Heart left ventricle (tissue), 16 donors: ENCODE measurements at regions of chr17 and their contacts with region 1.

Region 1: GRCh38 chr17:43994272-43995149 is 9.9 kb upstream of the NAGS start:
- DNase-seq: peak; percentile 49 to 83 (median 68)
- ATAC-seq: peak; percentile 72 to 89 (median 85)
- H3K4me3 ChIP-seq: peak overlapping the region in 9 of 12 donors; percentile 22 to 48 (median 34)
- H3K27ac ChIP-seq: no peak overlapping the region
- H3K4me1 ChIP-seq: peaks cover 0 to 10% (median 7%) of the 10 kb centered on the region in 12 donors
- H3K27me3 ChIP-seq: peaks cover 0 to 22% (median 10%) of the 10 kb centered on the region in 9 donors
- CTCF ChIP-seq: peak; percentile 73 to 93 (median 82)
- POLR2A ChIP-seq: no peak

Region 2: GRCh38 chr17:43878260-43879175 is 116.0 kb before region 1 on chr17:
- intact Hi-C with region 1: loop called in 2 of 10 experiments (anchors 2 to 10 kb)
- DNase-seq: peak; percentile 58 to 87 (median 68)
- ATAC-seq: peak; percentile 24 to 79 (median 74)
- H3K4me3 ChIP-seq: no peak overlapping the region
- H3K27ac ChIP-seq: peak overlapping the region in 3 of 12 donors; percentile 7 to 13 (median 12)
- H3K4me1 ChIP-seq: peaks cover 0 to 29% (median 7%) of the 10 kb centered on the region in 12 donors
- H3K27me3 ChIP-seq: no peaks in the 10 kb centered on the region
- CTCF ChIP-seq: peak in 11 of 12 donors; percentile 91 to 97 (median 95)
- POLR2A ChIP-seq: no peak

Region 3: DNA sequence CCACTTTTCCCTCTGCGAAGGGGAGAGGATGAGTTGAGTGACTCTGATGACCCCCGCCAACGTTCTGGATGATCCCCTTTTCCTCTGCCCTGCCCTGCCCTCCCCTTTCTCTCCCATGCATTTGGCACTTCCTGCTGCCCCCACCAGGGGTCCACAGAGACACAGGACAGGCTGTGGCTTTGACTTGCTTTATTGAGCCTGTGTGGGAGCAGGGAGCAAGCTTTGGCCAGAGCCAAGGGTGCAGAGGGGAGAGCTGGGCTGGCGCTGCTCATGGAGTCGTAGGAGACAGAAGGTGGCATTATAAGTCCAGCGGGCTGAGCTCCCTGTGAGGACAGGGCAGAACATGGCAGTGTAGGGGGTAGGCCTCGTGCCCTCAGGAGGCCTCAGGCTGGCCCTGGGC is 53.9 kb before region 1 on chr17:
- intact Hi-C with region 1: loop called in 9 of 10 experiments (anchors 1 to 2 kb)
- DNase-seq: peak in 2 of 5 donors; percentile 38 to 61
- ATAC-seq: peak; percentile 41 to 57 (median 44)
- H3K4me3 ChIP-seq: no peak overlapping the region
- H3K27ac ChIP-seq: no peak overlapping the region
- H3K4me1 ChIP-seq: peaks cover 0 to 11% (median 3%) of the 10 kb centered on the region in 12 donors
- H3K27me3 ChIP-seq: peaks cover 0 to 21% (median 9%) of the 10 kb centered on the region in 9 donors
- CTCF ChIP-seq: peak; percentile 17 to 46 (median 30)
- POLR2A ChIP-seq: no peak

Region 4: DNA sequence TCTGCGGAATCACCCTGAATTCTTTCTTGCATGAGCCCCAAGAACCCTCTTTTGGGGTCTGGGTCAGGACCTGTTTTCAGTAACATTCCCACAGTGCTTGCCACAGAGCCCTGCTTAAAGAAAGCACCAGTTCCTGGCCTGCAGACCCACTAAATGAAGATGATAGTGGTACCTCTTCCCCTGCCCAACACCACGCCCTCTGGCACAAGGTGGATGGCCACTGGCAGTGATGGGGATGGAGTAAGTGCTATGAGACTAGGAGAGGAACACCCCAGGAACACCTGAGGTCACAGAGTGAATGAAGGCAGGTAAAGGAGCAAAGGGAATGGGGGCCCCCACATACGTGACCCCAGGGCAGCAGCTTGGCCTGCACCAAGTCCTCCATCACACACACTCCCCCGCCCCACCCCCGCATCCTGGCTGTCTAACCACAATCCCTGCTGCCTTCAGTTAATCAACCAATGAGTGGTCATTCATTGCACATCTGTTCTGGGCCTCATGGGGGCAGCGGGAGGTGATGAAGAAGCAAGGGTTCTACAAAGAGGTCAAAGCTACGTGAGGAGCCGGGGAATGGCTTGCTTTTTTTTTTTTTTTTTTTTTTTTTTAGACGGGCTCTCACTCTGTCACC is 48.3 kb before region 1 on chr17:
- intact Hi-C with region 1: loop called (anchors 1 to 2 kb)
- DNase-seq: no peak
- ATAC-seq: no peak
- H3K4me3 ChIP-seq: no peak overlapping the region
- H3K27ac ChIP-seq: no peak overlapping the region
- H3K4me1 ChIP-seq: peaks cover 0 to 3% (median 0%) of the 10 kb centered on the region in 12 donors
- H3K27me3 ChIP-seq: peaks cover 0 to 40% (median 14%) of the 10 kb centered on the region in 9 donors
- CTCF ChIP-seq: no peak
- POLR2A ChIP-seq: no peak

Region 5: DNA sequence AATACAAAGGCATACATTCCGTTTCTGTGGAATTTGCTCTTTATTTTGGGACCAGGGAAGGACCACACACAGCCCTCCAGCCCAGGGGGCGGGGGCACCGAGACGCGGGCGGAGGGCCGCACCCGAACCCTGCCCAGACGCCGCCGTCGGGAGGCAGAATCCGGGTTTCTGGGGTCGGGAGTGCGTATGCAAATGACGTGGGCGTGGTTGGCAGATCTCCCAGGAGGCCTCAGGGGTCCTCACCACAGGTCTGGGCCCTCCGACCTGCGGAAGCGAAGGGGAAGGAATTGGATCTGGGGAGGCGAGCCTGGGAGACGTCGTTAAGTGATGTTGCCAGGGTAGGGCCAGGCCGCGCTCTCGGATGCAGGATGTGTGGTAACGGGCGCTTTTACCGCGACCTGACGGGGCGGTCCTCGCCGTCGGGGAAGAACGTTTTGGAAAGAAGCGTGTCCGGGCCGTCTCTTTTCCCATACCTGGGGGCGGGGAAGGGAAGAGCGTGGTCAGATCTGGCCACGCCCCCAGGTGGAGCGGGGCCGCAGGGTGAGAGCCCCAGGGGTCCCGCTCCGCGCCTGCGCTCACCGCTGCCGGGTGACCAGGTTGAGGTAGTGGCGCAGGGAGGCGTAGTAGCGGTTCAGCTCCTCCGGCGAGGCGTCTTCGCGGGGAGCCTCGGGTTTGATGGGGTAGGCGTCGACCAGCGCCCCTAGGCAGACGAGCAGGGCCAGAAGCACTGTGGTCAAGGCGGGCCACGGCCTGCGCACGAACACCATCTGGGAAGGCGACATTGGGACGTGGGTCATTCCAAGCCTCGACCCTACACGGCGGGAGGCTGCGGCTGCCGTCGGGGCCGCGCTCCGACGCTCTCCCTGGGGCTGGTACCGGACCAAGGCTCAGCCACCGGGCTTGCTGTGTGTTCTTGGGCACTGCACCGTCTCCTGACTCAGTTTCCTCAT is 41.5 kb before region 1 on chr17:
- intact Hi-C with region 1: loop called in 1 of 10 experiments (anchors 2 kb)
- DNase-seq: no peak
- ATAC-seq: no peak
- H3K4me3 ChIP-seq: peak overlapping the region in 2 of 12 donors; percentile 25
- H3K27ac ChIP-seq: no peak overlapping the region
- H3K4me1 ChIP-seq: peaks cover 0 to 13% (median 3%) of the 10 kb centered on the region in 12 donors
- H3K27me3 ChIP-seq: peaks cover 24 to 72% (median 45%) of the 10 kb centered on the region in 9 donors
- CTCF ChIP-seq: no peak
- POLR2A ChIP-seq: no peak

Region 6: DNA sequence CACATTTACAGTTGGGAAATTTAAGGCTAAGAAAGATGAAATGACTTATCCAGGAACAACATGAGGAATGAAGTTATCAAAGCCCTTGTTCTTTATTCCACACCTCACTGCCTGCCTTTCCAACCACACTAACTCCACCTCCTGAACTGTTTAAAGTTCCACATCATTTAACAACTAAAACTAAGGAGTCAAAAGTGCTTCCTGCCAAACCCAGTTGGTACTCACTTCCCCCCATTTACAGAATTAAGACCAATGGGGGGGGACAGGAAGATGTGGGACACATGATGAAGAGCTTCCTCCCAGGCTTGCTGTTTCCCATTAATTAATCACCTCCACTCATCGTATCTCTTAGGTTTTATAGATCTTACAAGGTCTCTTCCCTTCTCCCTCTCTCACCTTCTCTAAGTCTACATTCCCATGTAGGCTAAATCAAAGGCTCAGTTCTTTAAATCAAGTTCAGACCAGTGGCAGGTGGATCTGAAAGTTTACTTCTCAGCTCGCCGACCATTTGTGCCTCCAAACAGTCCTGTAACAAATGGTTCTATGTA is 39.4 kb after region 1 on chr17:
- intact Hi-C with region 1: no loop called
- DNase-seq: no peak
- ATAC-seq: no peak
- H3K4me3 ChIP-seq: no peak overlapping the region
- H3K27ac ChIP-seq: peak overlapping the region in 1 of 12 donors; percentile 8
- H3K4me1 ChIP-seq: peaks cover 0 to 25% (median 1%) of the 10 kb centered on the region in 12 donors
- H3K27me3 ChIP-seq: no peaks in the 10 kb centered on the region
- CTCF ChIP-seq: no peak
- POLR2A ChIP-seq: no peak